ENCODE measurements at regions of chr17 and their contacts with region 1.

Region 1: DNA sequence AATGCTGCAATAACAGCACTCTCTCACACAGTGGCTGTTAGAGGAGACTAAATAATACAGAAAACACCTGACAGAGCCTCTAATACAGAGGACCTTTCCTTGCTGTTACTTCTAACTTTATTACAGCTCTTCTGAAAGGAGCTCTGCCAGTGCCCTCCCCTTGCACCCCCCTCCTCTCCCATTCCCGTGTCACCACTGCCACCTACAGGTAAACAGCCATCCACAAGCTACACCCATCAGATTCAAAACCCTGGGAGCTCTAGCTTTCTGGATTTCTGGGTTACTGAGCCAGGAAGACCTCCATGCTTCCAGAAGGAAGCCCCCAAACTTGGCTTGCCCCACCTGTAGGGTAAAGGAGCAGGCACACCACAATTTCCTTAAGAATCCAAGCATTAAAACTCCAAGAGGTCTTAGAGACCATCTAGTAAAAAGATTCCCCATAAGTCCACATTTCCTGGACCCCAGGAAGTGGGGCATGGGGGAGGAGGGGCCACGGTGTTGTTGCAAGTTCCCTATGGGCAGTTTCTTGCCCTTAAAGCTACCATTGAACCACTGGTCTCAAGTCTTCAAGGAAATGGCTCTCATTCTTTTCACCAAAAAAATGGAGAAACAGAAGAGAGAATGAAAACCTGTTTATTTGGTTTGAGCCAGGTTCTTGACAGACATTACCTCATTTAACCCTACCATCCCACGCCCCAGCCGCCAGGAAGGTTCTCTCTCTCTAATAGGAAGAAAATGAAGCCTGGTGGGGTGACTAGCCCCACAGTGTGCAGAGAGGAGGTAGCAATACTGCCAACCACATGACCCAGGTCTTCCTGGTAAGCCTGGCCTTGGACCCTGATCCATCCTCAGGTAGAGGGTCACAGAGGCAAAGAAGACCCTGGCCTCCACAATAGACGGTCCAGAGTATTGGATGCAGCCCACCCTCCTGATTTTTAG is 52.8 kb downstream of the TOM1L2 start:
- DNase-seq: peak; percentile 78 to 83
- ATAC-seq: peak; percentile 77
- H3K4me3 ChIP-seq: no peak overlapping the region
- H3K27ac ChIP-seq: no peak overlapping the region
- H3K4me1 ChIP-seq: peaks cover 2 to 3% of the 10 kb centered on the region in 2 donors
- H3K27me3 ChIP-seq: no peaks in the 10 kb centered on the region

Region 2: DNA sequence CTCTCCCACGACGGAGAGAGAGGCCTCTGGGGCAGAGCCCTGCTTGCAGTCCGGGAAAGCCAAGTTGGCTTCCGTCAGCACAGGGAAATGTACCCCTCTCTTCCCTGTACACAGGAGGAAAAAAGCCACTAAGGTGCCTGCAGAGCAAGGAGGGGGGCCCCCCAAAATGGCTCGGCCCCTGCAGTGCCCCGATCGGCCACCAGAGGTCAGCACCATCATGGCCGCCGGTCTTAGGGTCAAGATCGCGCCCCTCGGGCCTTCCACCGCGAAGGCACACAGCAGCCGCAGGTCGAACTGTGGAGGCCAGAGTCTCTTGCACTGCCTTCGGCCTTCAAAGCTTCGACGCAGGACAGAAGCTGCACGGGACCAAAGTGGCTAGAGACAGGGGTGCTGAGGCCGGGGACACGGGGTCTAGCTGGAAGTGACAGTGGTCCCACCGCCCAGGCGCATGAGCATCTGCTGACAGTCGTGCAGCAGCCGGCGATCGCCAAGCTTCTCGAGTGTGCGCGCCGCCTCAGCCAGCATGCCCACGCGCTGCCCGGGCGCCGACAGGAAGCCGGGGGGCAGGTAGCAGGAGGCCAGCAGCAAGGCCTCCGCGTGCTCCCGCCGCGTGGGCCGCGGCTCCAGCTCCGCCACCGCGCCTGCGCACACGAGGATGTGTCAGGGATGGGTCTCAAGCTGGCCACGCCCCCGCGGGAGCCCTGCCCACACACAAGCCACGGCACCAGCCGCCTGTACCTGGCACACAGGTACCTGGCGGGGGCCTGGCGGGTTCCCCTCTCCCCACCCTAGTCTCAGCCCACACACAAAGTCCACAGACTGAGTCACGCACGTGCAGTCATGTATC is 107.0 kb before region 1 on chr17:
- intact Hi-C with region 1: loop called (anchors 5 kb)
- DNase-seq: peak; percentile 80 to 93
- ATAC-seq: peak; percentile 76
- H3K4me3 ChIP-seq: no peak overlapping the region
- H3K27ac ChIP-seq: no peak overlapping the region
- H3K4me1 ChIP-seq: no peaks in the 10 kb centered on the region
- H3K27me3 ChIP-seq: no peaks in the 10 kb centered on the region

Region 3: DNA sequence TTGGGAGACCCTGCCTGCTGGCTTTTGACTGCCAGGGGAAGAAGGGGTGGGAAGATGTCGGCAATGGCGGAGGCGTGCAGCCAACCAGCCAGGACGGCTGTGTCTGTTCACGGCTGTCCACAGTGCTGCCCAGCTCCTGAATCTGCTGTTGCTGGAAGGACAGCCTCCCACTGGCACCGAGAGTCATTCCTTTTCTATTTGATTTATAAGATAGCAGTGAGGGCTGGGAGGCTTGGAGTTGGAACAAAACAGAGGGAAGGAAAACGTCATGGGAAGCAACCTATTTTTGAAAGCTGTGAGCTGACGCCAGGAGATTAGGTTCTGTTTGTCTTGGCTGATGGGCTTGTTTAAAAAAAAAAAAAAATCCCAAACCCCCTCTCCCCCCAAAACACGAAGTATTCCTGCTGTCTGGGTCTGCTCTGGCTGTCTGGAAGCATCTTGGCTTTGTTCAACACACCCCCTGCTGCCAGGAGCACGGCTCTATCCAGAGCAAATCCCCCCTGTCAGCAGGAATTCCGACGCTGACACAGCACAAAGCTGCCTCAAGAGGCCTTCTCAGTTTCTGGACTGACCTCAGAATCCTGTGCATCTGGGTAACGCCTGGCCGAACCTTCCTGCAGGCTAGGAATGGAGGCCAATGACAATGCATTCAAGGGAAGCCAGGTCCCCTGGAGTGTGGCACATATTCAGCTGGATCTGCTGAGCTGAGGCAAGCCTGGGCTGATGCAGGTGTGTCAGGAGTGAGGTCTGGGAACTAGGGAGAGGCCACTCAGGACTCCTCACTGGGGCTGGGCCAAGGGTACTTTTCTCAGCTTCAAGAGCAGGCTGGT is 41.7 kb before region 1 on chr17:
- intact Hi-C with region 1: loop called in 1 of 2 experiments (anchors 5 kb)
- DNase-seq: peak; percentile 89 to 91
- ATAC-seq: peak; percentile 94
- H3K4me3 ChIP-seq: no peak overlapping the region
- H3K27ac ChIP-seq: peak overlapping the region; percentile 52 to 78
- H3K4me1 ChIP-seq: peaks cover 3 to 7% of the 10 kb centered on the region in 2 donors
- H3K27me3 ChIP-seq: no peaks in the 10 kb centered on the region

Region 4: GRCh38 chr17:17972126-17972951 is 52.9 kb after region 1 on chr17 and contains the starts of genes DRC3 and TOM1L2:
- intact Hi-C with region 1: loop called in 1 of 2 experiments (anchors 10 kb)
- DNase-seq: peak; percentile 100
- ATAC-seq: peak; percentile 99
- H3K4me3 ChIP-seq: peak within 1 kb of the TSS; percentile 74 to 75
- H3K27ac ChIP-seq: peak within 1 kb of the TSS in 1 of 2 donors; percentile 88
- H3K4me1 ChIP-seq: no peaks in the 10 kb centered on the region
- H3K27me3 ChIP-seq: no peaks in the 10 kb centered on the region
- total RNA-seq, gene DRC3: 2.0 to 2.8 TPM
- total RNA-seq, gene TOM1L2: 70.4 to 74.9 TPM

Region 5: DNA sequence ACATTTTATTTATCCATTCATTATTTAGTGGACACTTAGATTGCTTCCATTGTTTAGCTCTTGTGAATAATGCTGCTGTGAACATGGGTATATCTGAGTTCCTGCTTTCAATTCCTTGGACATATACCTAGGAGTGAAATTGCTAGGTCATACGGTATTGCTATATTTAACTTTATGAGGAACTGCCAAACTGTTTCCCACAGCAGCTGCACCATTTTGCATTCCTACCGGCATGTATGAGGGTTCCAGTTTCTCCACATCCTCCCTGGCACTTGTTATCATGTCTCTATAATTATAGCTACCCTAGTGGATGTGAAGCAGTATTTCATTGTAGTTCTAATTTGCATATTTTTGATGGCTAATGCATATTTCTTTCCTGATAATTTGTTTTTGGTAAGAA is 144.6 kb after region 1 on chr17:
- intact Hi-C with region 1: no loop called
- DNase-seq: no peak
- ATAC-seq: no peak
- H3K4me3 ChIP-seq: no peak overlapping the region
- H3K27ac ChIP-seq: no peak overlapping the region
- H3K4me1 ChIP-seq: no peaks in the 10 kb centered on the region
- H3K27me3 ChIP-seq: no peaks in the 10 kb centered on the region

Measured in aorta (tissue), 5 donors.